ENCODE measurements at regions of chr5 and their contacts with region 1.

Region 1: GRCh38 chr5:143879646-143880045 is 67.7 kb downstream of the HMHB1 start:
- DNase-seq: no peak
- ATAC-seq: no peak
- H3K4me3 ChIP-seq: no peak overlapping the region
- H3K27ac ChIP-seq: no peak overlapping the region
- H3K4me1 ChIP-seq: no peaks in the 10 kb centered on the region
- H3K27me3 ChIP-seq: no peaks in the 10 kb centered on the region
- CTCF ChIP-seq: no peak

Region 2: GRCh38 chr5:144092501-144092900 is 212.9 kb after region 1 on chr5:
- intact Hi-C with region 1: no loop called
- DNase-seq: no peak
- ATAC-seq: no peak
- H3K4me3 ChIP-seq: no peak overlapping the region
- H3K27ac ChIP-seq: no peak overlapping the region
- H3K4me1 ChIP-seq: peaks cover 0 to 20% (median 6%) of the 10 kb centered on the region in 9 donors
- H3K27me3 ChIP-seq: no peaks in the 10 kb centered on the region
- CTCF ChIP-seq: no peak

Region 3: DNA sequence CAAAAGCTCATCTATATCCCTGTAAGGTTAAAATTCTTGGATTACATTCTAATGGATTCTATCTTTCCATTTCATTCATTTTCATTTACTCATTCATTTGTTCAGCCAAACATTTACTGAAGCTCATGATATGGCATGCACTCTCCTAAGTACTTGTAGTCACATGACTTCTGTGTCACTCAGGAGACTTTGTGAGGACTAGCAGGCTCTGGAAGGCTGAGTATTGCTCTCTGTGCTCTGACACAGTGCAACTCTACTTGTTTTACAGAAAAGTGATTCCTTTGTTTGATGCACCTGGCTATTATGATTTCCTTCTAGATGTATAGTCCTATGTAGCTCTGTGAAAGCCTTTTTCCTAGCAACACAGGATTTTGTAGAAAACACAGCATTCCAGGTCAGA is 237.8 kb after region 1 on chr5:
- intact Hi-C with region 1: loop called in 1 of 10 experiments (anchors 5 kb)
- DNase-seq: no peak
- ATAC-seq: peak in 4 of 8 donors; percentile 58 to 84 (median 68)
- H3K4me3 ChIP-seq: no peak overlapping the region
- H3K27ac ChIP-seq: no peak overlapping the region
- H3K4me1 ChIP-seq: peaks cover 0 to 9% (median 0%) of the 10 kb centered on the region in 9 donors
- H3K27me3 ChIP-seq: no peaks in the 10 kb centered on the region
- CTCF ChIP-seq: no peak

Measured in heart right ventricle (tissue), 16 donors.